ENCODE measurements at regions of chr19 and their contacts with region 1.

Region 1: DNA sequence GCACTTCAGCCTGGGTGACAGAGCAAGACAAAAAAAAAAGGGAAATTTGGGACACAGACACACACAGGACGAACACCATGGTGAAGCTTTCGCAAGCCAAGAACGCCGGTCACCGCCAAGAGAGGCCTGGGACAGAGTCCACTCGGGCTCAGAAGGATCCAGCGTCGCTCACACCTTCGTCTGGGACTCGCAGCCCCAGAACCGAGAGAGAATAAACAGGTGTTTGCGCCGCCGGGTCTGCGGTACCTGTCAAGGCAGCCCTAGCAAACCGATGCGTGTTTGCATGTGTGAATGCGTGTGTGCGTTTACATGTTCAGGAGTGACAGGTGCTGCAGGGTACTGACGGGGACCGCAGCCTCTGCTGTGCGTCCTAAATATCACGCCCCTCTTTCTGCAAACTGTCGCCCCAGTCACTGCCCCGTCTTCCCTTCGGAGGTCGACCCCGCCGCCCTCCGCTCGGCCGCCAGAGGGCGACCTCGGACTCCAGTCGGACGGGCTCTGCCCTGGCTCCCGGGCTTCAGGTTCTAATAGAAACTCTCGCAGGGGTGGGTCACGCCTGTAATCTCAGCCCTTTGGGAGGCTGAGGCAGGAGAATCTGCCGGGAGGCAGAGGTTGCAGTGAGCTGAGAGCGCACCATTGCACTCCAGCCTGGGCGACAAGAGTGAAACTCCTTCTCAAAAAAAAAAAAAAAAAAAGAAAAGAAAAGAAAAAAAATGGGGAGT is 11.8 kb upstream of the CSNK1G2 start:
- DNase-seq: peak; percentile 52
- ATAC-seq: peak; percentile 95
- H3K4me3 ChIP-seq: peak overlapping the region; percentile 45
- H3K27ac ChIP-seq: no peak overlapping the region
- H3K4me1 ChIP-seq: peaks cover 6% of the 10 kb centered on the region
- H3K27me3 ChIP-seq: no peaks in the 10 kb centered on the region
- CTCF ChIP-seq: peak; percentile 84
- POLR2A ChIP-seq: no peak
- RAD21 ChIP-seq: peak; percentile 73

Region 2: DNA sequence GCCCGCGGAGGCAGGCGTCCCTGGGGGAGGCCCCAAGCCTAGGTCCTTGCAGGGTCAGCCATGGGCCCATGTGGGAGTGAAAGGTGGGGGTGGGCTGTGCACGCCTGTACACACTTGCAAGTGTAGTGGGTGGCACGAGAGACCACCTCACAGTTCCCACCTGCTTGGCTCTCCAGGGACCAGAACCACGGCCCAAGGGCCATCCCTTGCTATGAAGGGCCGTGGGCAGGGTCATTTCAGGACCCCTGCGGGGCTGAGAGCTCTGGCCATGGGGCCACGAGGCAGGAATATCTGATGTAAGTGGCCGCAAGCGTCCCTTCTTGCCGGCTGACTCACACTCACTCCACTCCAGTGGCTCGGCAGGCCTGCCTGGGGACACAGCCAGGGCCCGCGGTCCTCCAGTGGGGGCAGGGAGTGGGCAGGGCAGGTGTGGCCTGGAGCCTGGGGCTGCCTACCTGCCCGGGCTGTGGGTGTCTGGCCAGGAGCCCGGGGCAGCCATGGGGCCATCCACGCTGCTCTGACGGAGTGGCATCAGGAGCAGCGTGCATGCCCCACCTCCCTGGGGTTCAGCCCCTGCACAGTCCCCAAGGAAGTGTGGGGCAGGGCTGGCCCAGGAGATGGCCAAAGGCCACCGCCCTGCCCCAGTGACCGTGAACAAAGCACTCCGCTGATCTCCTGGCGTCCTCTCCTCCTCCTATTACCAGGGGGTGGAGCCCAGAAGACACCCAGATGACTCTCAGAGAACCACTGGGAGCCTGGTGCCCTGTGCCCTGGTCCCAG is 130.4 kb after region 1 on chr19:
- CTCF ChIA-PET with region 1: no interaction called
- POLR2A ChIA-PET with region 1: no interaction called
- dilution Hi-C with region 1: no loop called
- in situ Hi-C with region 1: no loop called
- intact Hi-C with region 1: no loop called
- DNase-seq: peak; percentile 61
- ATAC-seq: no peak
- H3K4me3 ChIP-seq: no peak overlapping the region
- H3K27ac ChIP-seq: peak overlapping the region; percentile 93
- H3K4me1 ChIP-seq: peaks cover 32% of the 10 kb centered on the region
- H3K27me3 ChIP-seq: no peaks in the 10 kb centered on the region
- CTCF ChIP-seq: no peak
- POLR2A ChIP-seq: no peak
- RAD21 ChIP-seq: no peak

Region 3: DNA sequence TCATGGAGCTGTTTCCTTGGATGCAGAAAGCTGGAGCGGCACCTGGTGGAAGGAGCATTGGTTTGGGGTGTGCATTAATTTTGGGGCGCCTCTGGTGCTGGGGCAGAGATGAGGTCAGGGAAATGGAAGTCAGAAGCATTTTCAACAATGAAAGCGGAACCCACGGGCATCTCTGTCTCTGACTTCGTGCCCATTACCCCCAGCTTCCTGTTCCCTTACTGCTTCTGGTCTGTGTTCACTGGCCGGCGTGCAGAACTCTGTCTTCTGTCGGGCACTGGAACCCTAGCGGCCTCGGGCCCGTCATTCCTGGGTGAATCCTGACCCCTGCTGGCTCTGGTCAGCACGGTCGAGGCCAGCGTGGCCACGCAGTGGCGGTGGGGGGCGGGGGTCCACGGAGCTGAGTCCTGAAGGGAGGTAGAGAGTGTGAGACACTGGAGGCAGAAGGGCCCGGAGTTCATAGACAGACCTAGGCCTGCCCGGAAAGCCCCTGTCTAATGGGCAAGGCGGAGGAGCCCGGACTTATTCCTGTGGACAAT is 386.7 kb after region 1 on chr19:
- CTCF ChIA-PET with region 1: no interaction called
- POLR2A ChIA-PET with region 1: no interaction called
- dilution Hi-C with region 1: no loop called
- in situ Hi-C with region 1: no loop called
- intact Hi-C with region 1: loop called (anchors 1 kb)
- DNase-seq: peak; percentile 56
- ATAC-seq: peak; percentile 99
- H3K4me3 ChIP-seq: no peak overlapping the region
- H3K27ac ChIP-seq: no peak overlapping the region
- H3K4me1 ChIP-seq: no peaks in the 10 kb centered on the region
- H3K27me3 ChIP-seq: peaks cover 6% of the 10 kb centered on the region
- CTCF ChIP-seq: peak; percentile 83
- POLR2A ChIP-seq: no peak
- RAD21 ChIP-seq: peak; percentile 87